Left ventricle myocardium superior (tissue), 1 donor: ENCODE measurements at regions of chr20 and their contacts with region 1.

Region 1: GRCh38 chr20:25195014-25195961 is at the start of gene ENTPD6:
- DNase-seq: peak; percentile 97
- ATAC-seq: peak; percentile 87
- total RNA-seq, gene ENTPD6: 130 TPM

Region 2: GRCh38 chr20:24992487-24993205 is 202.6 kb before region 1 on chr20 and contains the start of gene APMAP:
- intact Hi-C with region 1: loop called (anchors 10 kb)
- DNase-seq: peak; percentile 99
- ATAC-seq: peak; percentile 92
- total RNA-seq, gene APMAP: 25.9 TPM

Region 3: GRCh38 chr20:25254986-25255680 is 59.8 kb after region 1 on chr20:
- intact Hi-C with region 1: loop called (anchors 10 kb)
- DNase-seq: peak; percentile 78
- ATAC-seq: peak; percentile 90